PC-9 (cell line): ENCODE measurements at regions of chr14 and their contacts with region 1.

Region 1: DNA sequence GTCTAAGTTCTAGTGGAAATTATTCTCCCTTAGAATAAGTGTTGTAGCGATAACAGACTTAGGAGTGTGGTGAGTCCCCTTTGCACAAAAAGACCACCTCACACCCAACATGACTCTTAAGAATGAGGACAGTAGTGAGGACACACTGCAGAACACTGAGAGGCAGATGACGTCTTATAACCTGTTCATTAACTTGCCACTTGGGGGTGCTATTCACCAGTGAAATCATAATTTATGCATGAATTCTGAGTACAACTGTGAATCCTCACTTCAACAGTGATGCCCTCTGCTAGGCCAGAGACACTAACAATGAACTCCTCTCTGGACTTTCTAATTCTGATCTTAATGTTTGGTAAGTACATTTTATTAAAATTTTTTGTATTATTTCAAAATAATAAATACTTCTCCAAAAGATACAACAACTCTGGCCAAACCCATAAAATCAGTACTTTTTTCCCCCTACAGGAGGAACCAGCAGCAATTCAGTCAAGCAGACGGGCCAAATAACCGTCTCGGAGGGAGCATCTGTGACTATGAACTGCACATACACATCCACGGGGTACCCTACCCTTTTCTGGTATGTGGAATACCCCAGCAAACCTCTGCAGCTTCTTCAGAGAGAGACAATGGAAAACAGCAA is 274.7 kb downstream of the DAD1 start:
- DNase-seq: no peak
- H3K4me3 ChIP-seq: no peak overlapping the region
- H3K27ac ChIP-seq: no peak overlapping the region
- H3K4me1 ChIP-seq: no peaks in the 10 kb centered on the region
- H3K27me3 ChIP-seq: no peaks in the 10 kb centered on the region
- CTCF ChIP-seq: peak; percentile 73

Region 2: GRCh38 chr14:22303589-22304195 is 10.6 kb before region 1 on chr14:
- CTCF ChIA-PET with region 1: interaction called, 14 read pairs
- POLR2A ChIA-PET with region 1: no interaction called
- intact Hi-C with region 1: no loop called
- DNase-seq: no peak
- H3K4me3 ChIP-seq: no peak overlapping the region
- H3K27ac ChIP-seq: no peak overlapping the region
- H3K4me1 ChIP-seq: no peaks in the 10 kb centered on the region
- H3K27me3 ChIP-seq: no peaks in the 10 kb centered on the region
- CTCF ChIP-seq: peak; percentile 58

Region 3: DNA sequence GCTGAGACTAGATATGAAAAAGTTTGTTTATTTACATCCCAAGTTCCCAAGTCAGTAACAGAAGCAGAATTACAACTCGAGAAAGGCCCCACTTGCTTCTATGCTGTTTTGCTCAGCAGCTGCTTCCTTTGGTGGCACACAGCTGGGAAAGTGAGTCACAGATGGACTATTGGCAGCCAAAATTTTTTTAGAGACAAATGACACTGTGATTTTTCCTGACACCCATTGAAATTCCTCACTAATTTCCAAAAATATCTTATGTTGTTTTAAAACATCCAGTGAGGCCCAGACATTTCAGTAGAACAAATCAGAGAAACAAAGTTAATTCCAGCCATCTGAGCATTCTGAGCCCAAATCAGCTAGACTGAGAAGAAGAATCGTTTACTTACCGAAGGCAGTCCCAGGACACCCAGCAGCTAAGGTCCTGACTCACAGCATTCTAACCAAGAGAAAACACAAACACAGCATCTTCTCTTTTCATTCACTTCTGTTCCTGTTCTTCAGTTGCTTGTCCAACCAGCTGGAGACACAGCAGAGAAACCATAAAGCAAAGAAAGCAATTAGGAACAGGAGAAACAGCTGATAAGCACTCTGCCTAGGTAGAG is 86.5 kb after region 1 on chr14:
- CTCF ChIA-PET with region 1: no interaction called
- POLR2A ChIA-PET with region 1: no interaction called
- intact Hi-C with region 1: no loop called
- DNase-seq: no peak
- H3K4me3 ChIP-seq: no peak overlapping the region
- H3K27ac ChIP-seq: no peak overlapping the region
- H3K4me1 ChIP-seq: no peaks in the 10 kb centered on the region
- H3K27me3 ChIP-seq: no peaks in the 10 kb centered on the region
- CTCF ChIP-seq: no peak